ENCODE measurements at regions of chr7 and their contacts with region 1.

Region 1: GRCh38 chr7:15963206-15963605 is 276.7 kb upstream of the MEOX2 start:
- DNase-seq: no peak
- H3K4me3 ChIP-seq: no peak overlapping the region
- H3K27ac ChIP-seq: no peak overlapping the region
- H3K4me1 ChIP-seq: no peaks in the 10 kb centered on the region
- H3K27me3 ChIP-seq: no peaks in the 10 kb centered on the region
- CTCF ChIP-seq: no peak
- EP300 ChIP-seq: no peak
- POLR2A ChIP-seq: no peak

Region 2: GRCh38 chr7:15905251-15906040 is 57.8 kb before region 1 on chr7:
- intact Hi-C with region 1: no loop called
- DNase-seq: no peak
- H3K4me3 ChIP-seq: no peak overlapping the region
- H3K27ac ChIP-seq: no peak overlapping the region
- H3K4me1 ChIP-seq: peaks cover 4% of the 10 kb centered on the region
- H3K27me3 ChIP-seq: no peaks in the 10 kb centered on the region
- CTCF ChIP-seq: no peak
- EP300 ChIP-seq: no peak
- POLR2A ChIP-seq: no peak

Region 3: DNA sequence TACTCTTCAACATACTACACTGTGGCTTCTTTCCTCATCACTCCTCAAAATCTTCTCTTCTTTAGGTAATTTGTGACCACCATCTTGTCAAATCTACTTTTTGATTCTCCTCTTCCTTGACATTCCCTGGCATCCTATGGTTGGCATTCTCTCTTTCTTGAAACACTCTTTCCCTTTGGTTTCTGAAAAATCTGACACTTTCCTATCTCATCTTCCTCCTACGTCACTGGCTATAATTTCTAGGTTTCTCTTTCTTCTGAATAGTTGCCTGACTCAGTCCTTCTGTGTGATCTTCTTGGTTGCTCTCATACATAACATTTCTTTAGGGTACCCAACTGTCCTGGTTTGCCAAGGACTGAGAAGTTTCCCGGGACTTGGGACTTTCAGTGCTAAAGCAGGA is 73.5 kb after region 1 on chr7:
- intact Hi-C with region 1: loop called in 1 of 4 experiments (anchors 2 kb)
- DNase-seq: no peak
- H3K4me3 ChIP-seq: no peak overlapping the region
- H3K27ac ChIP-seq: no peak overlapping the region
- H3K4me1 ChIP-seq: no peaks in the 10 kb centered on the region
- H3K27me3 ChIP-seq: no peaks in the 10 kb centered on the region
- CTCF ChIP-seq: no peak
- EP300 ChIP-seq: no peak
- POLR2A ChIP-seq: no peak

Region 4: DNA sequence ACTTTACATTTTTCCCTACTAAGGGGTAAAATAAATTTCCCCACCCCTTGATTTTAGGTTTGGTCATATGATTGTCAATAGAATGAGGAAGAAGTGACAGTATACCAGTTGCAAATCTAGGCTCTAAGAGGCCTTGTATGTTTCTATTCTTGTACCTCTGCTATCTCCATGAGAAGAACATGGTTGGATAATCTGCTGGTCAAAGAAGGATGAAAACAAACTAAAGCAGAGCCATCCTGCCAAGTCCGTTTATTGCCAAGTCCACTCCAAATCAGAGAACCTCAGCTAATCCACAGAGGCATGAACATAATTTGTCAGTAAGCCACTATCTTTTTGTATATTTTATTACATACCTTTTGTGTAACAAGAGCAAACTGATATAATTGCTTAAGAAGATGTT is 360.1 kb after region 1 on chr7:
- intact Hi-C with region 1: no loop called
- DNase-seq: no peak
- H3K4me3 ChIP-seq: no peak overlapping the region
- H3K27ac ChIP-seq: no peak overlapping the region
- H3K4me1 ChIP-seq: no peaks in the 10 kb centered on the region
- H3K27me3 ChIP-seq: no peaks in the 10 kb centered on the region
- CTCF ChIP-seq: no peak
- EP300 ChIP-seq: no peak
- POLR2A ChIP-seq: no peak

Measured in ovary (tissue), 10 donors.